Activated CD4-positive, alpha-beta memory T cell treated with anti-CD3 and anti-CD28 coated beads for 36 hours (primary cell): ENCODE measurements at regions of chr12 and their contacts with region 1.

Region 1: GRCh38 chr12:546921-547845 is 87.4 kb downstream of the B4GALNT3 start:
- DNase-seq: peak; percentile 80
- H3K4me3 Mint-ChIP-seq: no peak overlapping the region
- H3K27ac Mint-ChIP-seq: no peak overlapping the region
- H3K4me1 Mint-ChIP-seq: peaks cover 10% of the 10 kb centered on the region
- H3K27me3 Mint-ChIP-seq: peaks cover 10% of the 10 kb centered on the region

Region 2: DNA sequence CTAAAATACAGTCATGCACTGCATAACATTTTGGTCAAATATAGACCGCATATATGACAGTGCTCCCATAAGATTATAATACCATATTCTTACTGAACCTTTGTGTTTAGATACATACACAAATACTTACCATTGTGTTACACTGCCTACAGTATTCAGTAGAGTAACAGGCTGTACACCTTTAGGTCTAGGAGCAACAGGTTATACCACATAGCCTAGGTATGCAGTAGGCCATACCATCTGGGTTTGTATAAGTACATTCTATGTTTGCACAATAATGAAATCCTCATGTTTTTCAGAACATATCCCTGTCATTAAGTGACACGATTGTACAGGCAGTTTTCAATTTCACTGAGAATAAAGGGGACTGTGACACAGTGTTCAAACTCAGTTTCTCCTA is 180.4 kb before region 1 on chr12:
- CTCF ChIA-PET with region 1: no interaction called
- POLR2A ChIA-PET with region 1: no interaction called
- intact Hi-C with region 1: no loop called
- DNase-seq: no peak
- H3K4me3 Mint-ChIP-seq: no peak overlapping the region
- H3K27ac Mint-ChIP-seq: no peak overlapping the region
- H3K4me1 Mint-ChIP-seq: peaks cover under 1% of the 10 kb centered on the region
- H3K27me3 Mint-ChIP-seq: no peaks in the 10 kb centered on the region

Region 3: GRCh38 chr12:442235-442884 is 104.8 kb before region 1 on chr12:
- CTCF ChIA-PET with region 1: interaction called, 31 read pairs
- POLR2A ChIA-PET with region 1: no interaction called
- intact Hi-C with region 1: no loop called
- DNase-seq: peak; percentile 51
- H3K4me3 Mint-ChIP-seq: no peak overlapping the region
- H3K27ac Mint-ChIP-seq: no peak overlapping the region
- H3K4me1 Mint-ChIP-seq: no peaks in the 10 kb centered on the region
- H3K27me3 Mint-ChIP-seq: no peaks in the 10 kb centered on the region

Region 4: GRCh38 chr12:459430-460258 is 87.5 kb before region 1 on chr12 and contains the start of gene B4GALNT3:
- CTCF ChIA-PET with region 1: interaction called, 136 read pairs
- POLR2A ChIA-PET with region 1: interaction called, 3 read pairs
- intact Hi-C with region 1: no loop called
- DNase-seq: peak; percentile 45
- H3K4me3 Mint-ChIP-seq: peak within 1 kb of the TSS; percentile 74
- H3K27ac Mint-ChIP-seq: no peak within 1 kb of the TSS
- H3K4me1 Mint-ChIP-seq: peaks cover 15% of the 10 kb centered on the region
- H3K27me3 Mint-ChIP-seq: peaks cover 18% of the 10 kb centered on the region
- total RNA-seq, gene B4GALNT3: 1.2 to 1.9 TPM

Region 5: GRCh38 chr12:464484-465267 is 82.5 kb before region 1 on chr12:
- CTCF ChIA-PET with region 1: interaction called, 136 read pairs
- POLR2A ChIA-PET with region 1: interaction called, 3 read pairs
- intact Hi-C with region 1: no loop called
- DNase-seq: no peak
- H3K4me3 Mint-ChIP-seq: no peak overlapping the region
- H3K27ac Mint-ChIP-seq: no peak overlapping the region
- H3K4me1 Mint-ChIP-seq: peaks cover 4% of the 10 kb centered on the region
- H3K27me3 Mint-ChIP-seq: peaks cover 17% of the 10 kb centered on the region